ENCODE measurements at regions of chr18 and their contacts with region 1.

Region 1: DNA sequence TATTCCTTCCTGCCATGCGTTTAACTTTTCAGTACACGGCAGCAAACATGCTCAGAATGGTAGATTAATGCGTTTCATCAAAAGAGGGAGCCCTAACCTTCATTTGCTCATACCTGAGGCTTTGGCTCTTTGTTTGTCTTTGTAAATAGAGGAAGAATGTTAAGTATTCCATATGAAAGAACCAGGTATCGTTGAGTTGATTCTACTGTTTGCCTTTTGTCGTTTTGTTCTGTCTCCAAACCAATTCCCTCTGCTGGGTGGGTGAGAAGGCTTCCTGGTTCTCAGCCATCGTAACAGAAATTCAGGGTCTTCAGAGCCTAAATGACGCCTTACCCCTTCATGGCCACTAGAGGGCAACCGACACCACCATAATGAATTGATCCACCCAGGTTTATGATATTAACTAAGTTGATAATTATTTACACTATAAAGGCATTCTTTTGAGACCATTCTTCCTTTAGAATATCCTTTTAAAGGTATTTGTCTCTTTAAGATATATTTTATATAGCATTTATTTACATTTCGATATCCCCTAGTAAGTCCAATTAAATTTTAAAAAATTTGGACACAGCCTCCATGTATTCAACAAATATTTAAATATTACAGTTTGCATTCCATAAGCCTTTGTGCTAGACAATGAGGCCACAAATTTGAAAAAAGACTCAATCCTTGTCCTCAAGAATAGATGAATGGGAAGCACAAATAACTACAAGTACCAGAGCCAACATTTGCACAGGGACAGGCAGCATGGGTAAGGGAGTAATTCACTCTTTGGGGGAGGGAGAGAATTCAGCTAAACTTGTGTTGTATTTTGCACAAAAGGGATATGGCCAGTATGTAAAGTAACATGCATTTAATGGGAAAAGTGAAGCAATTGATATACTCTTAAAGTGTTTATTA is 48.1 kb downstream of the TIMM21 start:
- DNase-seq: peak; percentile 36
- ATAC-seq: peak; percentile 93
- H3K4me3 ChIP-seq: no peak overlapping the region
- H3K27ac ChIP-seq: no peak overlapping the region
- H3K4me1 ChIP-seq: no peaks in the 10 kb centered on the region
- H3K27me3 ChIP-seq: peaks cover 0 to 3% of the 10 kb centered on the region in 2 experiments; a peak in 1 of 4 replicates
- CTCF ChIP-seq: peak; percentile 65 to 85 (median 67)
- EP300 ChIP-seq: no peak
- POLR2A ChIP-seq: no peak
- RAD21 ChIP-seq: peak; percentile 89

Region 2: DNA sequence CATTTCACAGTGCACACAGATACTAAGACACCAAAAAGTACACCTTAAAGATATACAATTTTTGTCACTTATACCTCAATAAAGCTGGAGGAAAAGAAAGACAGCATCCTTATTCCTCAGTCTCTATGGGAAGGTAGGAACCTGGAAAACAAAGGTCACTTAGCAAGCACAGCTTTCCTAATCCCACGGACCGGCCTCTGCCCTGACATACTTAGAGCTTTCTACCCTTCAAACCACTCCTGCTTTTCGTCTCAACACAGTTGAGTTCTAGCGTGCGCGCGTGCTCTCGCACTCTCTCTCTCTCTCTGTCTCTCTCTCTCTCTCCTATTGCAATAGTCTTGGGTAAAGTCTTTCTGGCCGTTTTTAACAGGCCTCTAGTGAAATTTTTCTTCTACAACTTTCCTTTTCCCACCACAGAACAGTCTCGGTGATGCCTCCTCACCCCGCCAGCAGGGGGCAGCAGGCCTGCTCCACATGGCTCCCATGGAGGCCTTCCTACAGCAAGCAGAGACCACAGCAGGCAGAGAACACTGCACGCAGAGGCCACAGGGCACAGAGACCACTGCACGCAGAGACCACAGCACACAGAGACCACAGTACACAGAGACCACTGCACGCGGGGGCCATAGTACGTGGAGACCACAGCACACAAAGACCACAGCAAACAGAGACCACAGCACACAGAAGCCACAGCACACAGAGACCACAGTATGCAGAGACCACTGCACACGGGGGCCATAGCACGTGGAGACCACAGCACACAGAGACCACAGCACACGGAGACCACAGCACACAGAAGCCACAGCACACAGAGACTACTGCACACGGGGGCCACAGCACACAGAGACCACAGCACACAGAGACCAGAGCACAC is 155.8 kb before region 1 on chr18:
- CTCF ChIA-PET with region 1: no interaction called
- POLR2A ChIA-PET with region 1: no interaction called
- RAD21 ChIA-PET with region 1: no interaction called
- SMC1A ChIA-PET with region 1: no interaction called
- in situ Hi-C with region 1: no loop called
- intact Hi-C with region 1: no loop called
- DNase-seq: no peak
- ATAC-seq: peak; percentile 97
- H3K4me3 ChIP-seq: no peak overlapping the region
- H3K27ac ChIP-seq: no peak overlapping the region
- H3K4me1 ChIP-seq: no peaks in the 10 kb centered on the region
- H3K27me3 ChIP-seq: no peaks in the 10 kb centered on the region; a peak in 1 of 4 replicates
- CTCF ChIP-seq: peak; percentile 62 to 77 (median 73)
- EP300 ChIP-seq: no peak
- POLR2A ChIP-seq: no peak
- RAD21 ChIP-seq: peak; percentile 61

Region 3: DNA sequence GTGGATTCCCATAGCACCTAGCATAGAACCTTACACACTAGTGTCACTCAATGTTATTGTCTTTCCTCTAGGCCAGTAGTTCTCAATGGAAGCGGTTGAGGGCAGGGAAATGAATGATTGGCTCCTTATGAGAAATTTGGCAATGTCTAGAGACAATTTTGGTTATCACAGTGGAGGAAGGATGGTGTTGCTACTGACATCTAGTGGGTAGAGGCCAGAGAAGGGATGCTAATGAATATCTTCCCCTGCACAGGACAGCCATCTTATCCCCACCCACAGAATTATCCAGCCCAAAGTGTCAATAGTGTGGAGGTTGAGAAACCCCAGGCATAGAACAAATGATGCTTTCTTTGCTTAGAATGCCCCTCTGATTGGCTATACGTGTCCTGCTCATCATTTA is 134.9 kb after region 1 on chr18:
- CTCF ChIA-PET with region 1: interaction called, 4 read pairs
- POLR2A ChIA-PET with region 1: no interaction called
- RAD21 ChIA-PET with region 1: no interaction called
- SMC1A ChIA-PET with region 1: interaction called, 4 read pairs
- in situ Hi-C with region 1: loop called (anchors 5 kb)
- intact Hi-C with region 1: no loop called
- DNase-seq: no peak
- ATAC-seq: peak; percentile 79
- H3K4me3 ChIP-seq: no peak overlapping the region
- H3K27ac ChIP-seq: no peak overlapping the region
- H3K4me1 ChIP-seq: peaks cover 5% of the 10 kb centered on the region
- H3K27me3 ChIP-seq: no peaks in the 10 kb centered on the region
- CTCF ChIP-seq: peak; percentile 32 to 39 (median 37); a peak in 5 of 6 replicates
- EP300 ChIP-seq: no peak
- POLR2A ChIP-seq: no peak
- RAD21 ChIP-seq: 0 out of 2 replicates have a peak, but pooled peaks have one; percentile 27

Region 4: DNA sequence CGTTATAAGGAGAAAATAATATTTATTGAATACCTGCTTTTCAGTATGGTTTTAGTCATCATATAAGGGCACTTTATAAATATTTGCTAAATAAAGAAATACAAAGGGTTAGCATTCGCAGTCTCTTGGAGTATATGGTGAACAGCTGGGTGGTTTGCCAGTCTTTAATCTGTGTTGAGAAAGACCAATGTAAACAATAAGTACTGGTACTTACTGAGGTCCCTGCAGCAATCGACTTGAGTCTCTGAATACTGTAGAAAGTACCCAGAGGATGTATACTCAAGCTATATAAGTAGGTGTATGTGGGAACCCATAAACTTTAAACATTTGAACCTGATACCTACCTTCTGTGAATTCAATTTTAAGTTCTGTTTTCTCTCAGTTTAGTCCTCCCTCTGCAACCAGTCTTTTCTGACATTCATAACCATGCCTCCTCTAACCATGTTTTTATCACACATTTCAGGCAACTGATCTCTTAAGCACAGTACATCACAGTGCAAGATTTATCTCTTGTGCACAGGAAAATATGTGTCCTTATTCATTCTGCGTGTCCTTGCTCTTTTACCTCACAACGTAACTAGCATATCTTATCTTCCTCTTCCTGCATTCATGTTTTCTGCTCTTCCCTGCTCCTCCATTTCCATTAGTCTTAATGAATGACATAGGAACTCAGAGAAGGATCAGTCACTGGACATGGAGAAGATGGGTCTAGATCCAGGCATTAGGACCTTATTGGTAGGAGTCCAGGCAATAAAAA is 140.9 kb after region 1 on chr18:
- CTCF ChIA-PET with region 1: interaction called, 79 read pairs
- POLR2A ChIA-PET with region 1: no interaction called
- RAD21 ChIA-PET with region 1: interaction called, 44 read pairs
- SMC1A ChIA-PET with region 1: interaction called, 45 read pairs
- in situ Hi-C with region 1: loop called (anchors 5 kb)
- intact Hi-C with region 1: loop called (anchors 1 kb)
- DNase-seq: no peak
- ATAC-seq: no peak
- H3K4me3 ChIP-seq: no peak overlapping the region
- H3K27ac ChIP-seq: no peak overlapping the region
- H3K4me1 ChIP-seq: peaks cover 5% of the 10 kb centered on the region
- H3K27me3 ChIP-seq: no peaks in the 10 kb centered on the region
- CTCF ChIP-seq: no peak
- EP300 ChIP-seq: no peak
- POLR2A ChIP-seq: no peak
- RAD21 ChIP-seq: no peak

Region 5: GRCh38 chr18:74476140-74476539 is 279.7 kb after region 1 on chr18:
- CTCF ChIA-PET with region 1: interaction called, 3 read pairs
- POLR2A ChIA-PET with region 1: no interaction called
- RAD21 ChIA-PET with region 1: no interaction called
- SMC1A ChIA-PET with region 1: no interaction called
- in situ Hi-C with region 1: no loop called
- intact Hi-C with region 1: loop called (anchors 5 kb)
- DNase-seq: no peak
- ATAC-seq: peak; percentile 76
- H3K4me3 ChIP-seq: no peak overlapping the region
- H3K27ac ChIP-seq: no peak overlapping the region
- H3K4me1 ChIP-seq: no peaks in the 10 kb centered on the region
- H3K27me3 ChIP-seq: peaks cover 0 to 4% of the 10 kb centered on the region in 2 experiments; a peak in 3 of 4 replicates
- CTCF ChIP-seq: peak; percentile 43 to 68 (median 60); a peak in 5 of 6 replicates
- EP300 ChIP-seq: no peak
- POLR2A ChIP-seq: no peak
- RAD21 ChIP-seq: peak; percentile 27

Measured in GM12878 (cell line).